HEK293T (cell line): ENCODE measurements at regions of chr1 and their contacts with region 1.

Region 1: DNA sequence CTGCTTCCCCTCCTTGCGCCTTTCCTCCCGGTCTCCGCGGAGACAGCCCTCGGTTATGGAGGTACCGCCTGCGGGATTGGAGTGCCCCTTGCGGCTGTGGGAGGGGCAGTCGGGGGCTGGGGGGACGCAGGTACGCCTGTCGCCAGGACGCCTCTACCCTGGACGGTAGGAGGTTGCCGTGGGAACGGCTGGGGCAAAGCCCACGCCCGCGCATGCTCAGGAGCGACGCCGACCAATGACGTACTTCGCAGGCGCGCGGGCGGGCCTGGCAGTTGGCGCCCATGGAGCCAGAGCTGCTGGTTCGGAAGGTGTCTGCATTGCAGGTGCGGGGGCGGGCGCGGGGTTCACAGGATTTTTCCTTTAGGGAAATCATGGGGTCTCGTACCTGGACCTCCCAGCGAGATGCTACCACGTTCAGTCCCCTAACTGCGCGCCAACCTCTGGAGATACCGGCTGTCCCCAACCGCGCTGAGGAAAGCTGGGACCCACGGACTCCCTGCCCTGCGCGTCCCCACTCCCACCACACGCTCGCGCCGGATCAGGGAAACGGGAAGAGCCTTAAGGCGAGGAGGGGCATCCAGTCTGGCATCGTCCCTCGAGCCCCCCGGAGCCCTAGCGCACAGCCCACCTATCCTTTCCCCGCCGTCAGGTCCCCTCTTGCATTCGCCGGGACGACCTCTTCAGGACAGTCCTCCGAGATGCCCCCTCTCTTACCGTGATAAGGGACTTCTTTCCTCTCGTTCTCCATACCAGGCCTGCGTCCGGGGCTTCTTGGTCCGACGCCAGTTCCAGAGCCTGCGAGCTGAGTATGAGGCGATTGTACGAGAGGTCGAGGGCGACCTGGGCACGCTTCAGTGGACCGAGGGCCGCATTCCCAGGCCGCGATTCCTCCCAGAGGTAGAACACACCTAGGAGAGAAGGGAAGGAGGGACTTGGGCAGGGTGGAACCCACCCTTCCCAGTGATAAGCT is at the start of gene IQCC:
- DNase-seq: peak; percentile 99

Region 2: DNA sequence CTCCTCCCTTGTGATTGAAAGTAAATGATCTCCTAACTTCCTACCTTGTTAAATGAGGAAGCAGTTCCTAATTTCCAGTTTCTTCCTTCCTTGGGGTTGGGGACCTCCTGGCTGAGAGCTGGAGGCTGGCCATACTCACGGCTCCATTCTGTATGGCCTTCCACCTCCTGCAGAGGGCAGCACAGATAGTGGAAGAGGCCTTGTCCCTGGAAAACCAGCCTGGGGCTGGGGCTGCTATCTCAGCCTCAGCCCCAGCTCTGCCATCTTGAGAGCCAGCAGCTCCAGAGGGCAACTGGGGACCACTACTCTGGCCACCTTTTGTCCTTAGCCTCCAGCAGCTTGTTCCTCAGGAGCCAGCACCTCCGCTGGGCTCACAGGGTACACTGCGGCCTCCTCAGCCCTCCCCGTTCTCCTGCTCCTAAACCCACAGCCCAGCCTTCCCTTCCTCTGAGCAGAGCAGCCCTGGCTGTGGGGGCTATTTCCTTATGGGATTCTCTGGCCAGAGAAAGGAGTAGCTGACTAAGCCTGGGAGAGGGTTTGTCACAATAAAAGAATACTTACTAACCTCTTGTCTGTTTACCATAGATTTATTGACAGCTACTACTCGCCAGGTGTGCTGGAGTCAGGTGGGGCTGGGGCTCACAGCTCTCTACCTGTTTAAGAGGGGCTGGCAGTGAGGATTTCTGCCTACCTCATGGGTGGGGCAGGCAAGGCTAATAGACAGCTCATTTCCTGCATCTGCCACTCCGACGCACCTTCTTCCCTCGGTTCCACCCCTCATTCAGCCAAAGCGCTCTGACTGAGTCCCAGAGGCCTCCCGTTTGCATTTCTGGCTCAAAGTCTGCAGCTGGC is 10.2 kb after region 1 on chr1:
- CTCF ChIA-PET with region 1: interaction called, 7 read pairs
- POLR2A ChIA-PET with region 1: interaction called, 21 read pairs
- DNase-seq: peak; percentile 87

Region 3: GRCh38 chr1:32221980-32222755 is 16.5 kb after region 1 on chr1 and contains the starts of genes EIF3I and TMEM234:
- CTCF ChIA-PET with region 1: no interaction called
- POLR2A ChIA-PET with region 1: interaction called, 21 read pairs
- DNase-seq: peak; percentile 100